Right ventricle myocardium superior (tissue), 1 donor: ENCODE measurements at regions of chr17 and their contacts with region 1.

Region 1: DNA sequence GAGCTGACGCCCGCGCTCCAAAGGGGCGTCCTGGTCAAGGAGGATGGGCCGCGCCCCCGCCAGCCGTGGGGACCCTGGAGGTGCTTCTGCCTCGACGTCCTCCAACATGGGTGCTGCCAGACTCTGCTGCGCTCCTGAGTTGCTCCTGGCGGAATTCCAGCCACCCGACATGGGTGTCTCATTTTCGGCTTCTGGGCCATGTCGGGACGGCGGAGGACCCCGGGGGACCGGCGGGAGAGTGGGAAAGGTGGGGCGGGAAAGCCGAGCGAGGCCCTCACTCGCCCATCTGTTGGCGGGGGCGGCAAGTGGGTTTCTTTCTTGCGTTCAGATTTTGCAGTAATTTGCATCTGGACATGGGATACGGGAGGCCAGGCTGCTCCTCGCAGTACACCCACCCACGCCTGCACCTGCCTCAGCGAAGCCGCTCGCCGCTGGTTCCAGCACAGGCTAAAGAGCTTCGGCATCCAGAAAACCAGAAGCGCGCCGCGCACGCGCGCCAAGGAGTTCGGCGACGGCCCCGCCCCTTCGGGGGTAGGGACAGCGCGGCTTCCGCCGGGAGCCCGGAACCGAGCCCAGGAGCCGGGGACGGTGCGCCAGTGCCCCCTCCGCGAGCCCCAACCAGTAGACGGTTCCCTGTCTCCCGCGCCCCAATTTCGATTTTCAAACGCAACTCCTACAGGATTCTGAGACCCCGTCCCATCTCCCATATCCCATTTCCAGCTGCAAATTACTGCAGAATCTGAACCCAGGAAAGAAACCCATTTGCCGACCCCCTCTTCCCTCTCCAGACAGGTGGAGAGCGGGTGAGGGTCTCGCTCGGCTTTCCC is at the start of gene ARMC7:
- DNase-seq: peak; percentile 96
- ATAC-seq: peak; percentile 92
- total RNA-seq, gene ARMC7: 5.3 TPM

Region 2: DNA sequence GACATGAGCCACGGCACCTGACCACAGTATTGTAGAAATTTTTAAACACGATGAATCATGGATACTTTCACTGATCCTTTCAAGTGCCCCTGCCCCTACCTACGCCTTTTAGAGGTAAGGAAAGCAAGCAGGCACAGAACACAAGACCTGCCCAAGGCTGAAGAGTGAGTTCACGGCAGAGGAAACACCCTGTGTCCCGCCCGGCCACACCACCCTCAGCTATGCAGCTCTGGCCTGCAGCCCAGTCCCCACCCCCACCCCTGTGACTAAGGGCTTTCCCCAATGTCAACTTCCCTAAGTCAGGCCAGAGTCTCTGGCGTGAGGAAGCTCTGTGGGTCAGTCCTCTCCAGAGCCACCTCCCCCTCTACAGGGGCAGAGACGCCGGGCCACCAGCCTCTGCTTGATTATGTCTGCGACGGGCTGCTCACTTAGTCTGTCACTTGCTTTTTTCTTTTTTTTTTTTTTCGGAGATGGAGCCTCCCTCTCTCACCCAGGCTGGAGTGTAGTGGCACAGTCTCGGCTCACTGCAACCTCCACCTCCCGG is 13.5 kb before region 1 on chr17:
- intact Hi-C with region 1: no loop called
- DNase-seq: peak; percentile 81
- ATAC-seq: peak; percentile 84

Region 3: GRCh38 chr17:75173526-75173925 is 63.9 kb after region 1 on chr17:
- intact Hi-C with region 1: loop called (anchors 5 kb)
- DNase-seq: no peak
- ATAC-seq: no peak

Region 4: GRCh38 chr17:75205037-75205792 is 95.6 kb after region 1 on chr17 and contains the start of gene NUP85:
- intact Hi-C with region 1: loop called (anchors 10 kb)
- DNase-seq: peak; percentile 96
- ATAC-seq: peak; percentile 97
- total RNA-seq, gene NUP85: 25.2 TPM